ENCODE measurements at regions of chr20 and their contacts with region 1.

Region 1: GRCh38 chr20:5448449-5449118 is 131.8 kb upstream of the PROKR2 start:
- DNase-seq: peak; percentile 49
- H3K4me3 ChIP-seq: no peak overlapping the region
- H3K27ac ChIP-seq: no peak overlapping the region
- H3K4me1 ChIP-seq: no peaks in the 10 kb centered on the region
- H3K27me3 ChIP-seq: peaks cover 3 to 13% of the 10 kb centered on the region in 2 experiments
- CTCF ChIP-seq: peak; percentile 61 to 65
- POLR2A ChIP-seq: no peak

Region 2: DNA sequence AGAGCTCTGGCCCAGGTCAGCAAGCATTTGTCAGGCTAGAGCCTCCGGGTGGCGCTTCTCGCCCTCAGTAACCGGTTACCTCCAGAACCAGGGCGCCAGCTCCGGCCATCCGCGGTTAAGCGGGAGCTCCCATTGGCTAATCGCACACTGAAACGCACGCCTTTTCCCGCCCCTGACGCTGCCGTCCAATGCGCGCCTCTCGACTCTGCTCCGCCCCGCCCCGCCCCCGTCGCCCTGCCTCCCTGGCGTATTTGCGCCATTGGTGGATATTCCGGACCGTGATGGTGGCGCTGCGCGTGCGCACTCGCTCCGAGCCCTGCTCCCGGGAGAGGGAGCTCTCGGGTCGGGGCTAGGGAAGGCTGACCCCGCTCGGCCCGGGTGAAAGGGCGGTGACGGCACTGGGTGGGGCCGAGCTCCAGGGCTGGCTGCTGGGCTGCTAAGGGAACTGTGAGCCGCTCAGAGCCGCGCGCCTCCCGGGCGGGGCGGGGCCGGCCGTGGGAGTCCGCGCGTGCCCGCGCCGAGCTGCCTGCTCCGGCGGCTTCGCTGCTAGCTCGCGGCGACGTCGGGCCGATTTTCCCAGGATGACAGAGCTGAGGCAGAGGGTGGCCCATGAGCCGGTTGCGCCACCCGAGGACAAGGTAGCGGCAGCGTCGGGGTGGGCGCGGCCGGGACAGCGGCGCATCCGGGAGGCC is 321.9 kb before region 1 on chr20 and contains the start of gene CDS2:
- CTCF ChIA-PET with region 1: interaction called, 7 read pairs
- POLR2A ChIA-PET with region 1: no interaction called
- dilution Hi-C with region 1: no loop called
- intact Hi-C with region 1: loop called (anchors 2 kb)
- DNase-seq: peak; percentile 100
- H3K4me3 ChIP-seq: peak within 1 kb of the TSS; percentile 55 to 87 (median 73)
- H3K27ac ChIP-seq: peak within 1 kb of the TSS; percentile 63
- H3K4me1 ChIP-seq: peaks cover 10% of the 10 kb centered on the region
- H3K27me3 ChIP-seq: no peaks in the 10 kb centered on the region
- CTCF ChIP-seq: peak; percentile 28 to 59
- POLR2A ChIP-seq: peak; percentile 19
- total RNA-seq, gene CDS2: 48.1 and 49.0 TPM in 2 replicates

Region 3: GRCh38 chr20:5215672-5216304 is 232.8 kb before region 1 on chr20:
- CTCF ChIA-PET with region 1: interaction called, 228 read pairs
- POLR2A ChIA-PET with region 1: no interaction called
- dilution Hi-C with region 1: no loop called
- intact Hi-C with region 1: loop called (anchors 5 kb)
- DNase-seq: peak; percentile 84
- H3K4me3 ChIP-seq: no peak overlapping the region
- H3K27ac ChIP-seq: peak overlapping the region; percentile 14
- H3K4me1 ChIP-seq: peaks cover 13% of the 10 kb centered on the region
- H3K27me3 ChIP-seq: no peaks in the 10 kb centered on the region
- CTCF ChIP-seq: no peak
- POLR2A ChIP-seq: no peak

Region 4: DNA sequence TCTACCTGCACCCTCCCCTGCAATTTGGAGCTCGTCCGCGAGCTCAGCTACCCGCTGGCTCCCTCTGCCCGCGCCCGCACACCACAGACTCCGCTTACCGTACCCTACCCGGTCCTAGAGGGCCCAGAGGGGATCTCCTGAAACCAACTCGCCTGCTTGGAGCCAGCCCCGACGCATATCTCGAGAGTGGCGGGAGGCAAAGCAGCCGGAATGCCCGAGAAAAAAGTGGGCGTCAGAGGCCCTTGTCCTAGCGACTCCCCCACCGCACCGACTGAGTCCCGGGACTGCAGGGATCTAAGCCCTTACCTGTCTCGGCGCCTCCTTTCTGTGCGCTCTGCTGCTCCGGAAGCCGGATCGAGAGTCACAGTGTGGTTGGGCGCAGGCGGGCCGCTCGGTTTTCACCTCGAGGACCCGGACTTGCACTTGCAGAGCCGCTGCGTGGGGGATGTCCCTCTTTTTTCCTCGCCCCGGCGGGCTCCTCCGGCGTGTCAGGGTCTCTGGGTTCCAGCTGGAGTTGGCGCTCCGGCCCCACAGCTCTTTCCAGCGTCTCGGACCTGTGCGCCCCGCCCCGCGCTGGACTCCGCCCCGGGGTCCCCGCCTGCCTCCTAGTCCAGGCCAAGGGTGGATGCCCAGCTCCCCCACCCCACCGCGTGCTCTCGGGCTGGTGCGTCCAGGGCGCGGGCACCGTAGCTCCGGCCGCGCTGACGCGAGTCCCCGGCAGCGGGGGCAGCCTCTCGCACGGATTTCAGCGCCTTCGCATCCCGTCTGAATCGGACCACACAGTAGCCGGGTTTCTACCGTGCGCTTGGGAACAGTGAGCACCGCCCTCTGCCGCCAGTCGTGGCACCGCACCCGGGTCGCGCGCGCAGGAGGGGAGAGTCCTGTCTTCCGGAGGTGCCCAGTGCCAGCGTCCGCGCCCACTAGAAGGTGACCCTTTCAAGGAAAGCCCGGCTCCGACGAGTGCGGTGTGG is 132.1 kb before region 1 on chr20 and contains the start of gene PROKR2:
- CTCF ChIA-PET with region 1: no interaction called
- POLR2A ChIA-PET with region 1: no interaction called
- dilution Hi-C with region 1: no loop called
- intact Hi-C with region 1: loop called (anchors 10 kb)
- DNase-seq: no peak
- H3K4me3 ChIP-seq: no peak within 1 kb of the TSS
- H3K27ac ChIP-seq: no peak within 1 kb of the TSS
- H3K4me1 ChIP-seq: no peaks in the 10 kb centered on the region
- H3K27me3 ChIP-seq: peaks cover 41 to 45% of the 10 kb centered on the region in 2 experiments
- CTCF ChIP-seq: peak in 1 of 2 donors; percentile 16
- POLR2A ChIP-seq: no peak
- total RNA-seq, gene PROKR2: not detected in 2 replicates

Region 5: DNA sequence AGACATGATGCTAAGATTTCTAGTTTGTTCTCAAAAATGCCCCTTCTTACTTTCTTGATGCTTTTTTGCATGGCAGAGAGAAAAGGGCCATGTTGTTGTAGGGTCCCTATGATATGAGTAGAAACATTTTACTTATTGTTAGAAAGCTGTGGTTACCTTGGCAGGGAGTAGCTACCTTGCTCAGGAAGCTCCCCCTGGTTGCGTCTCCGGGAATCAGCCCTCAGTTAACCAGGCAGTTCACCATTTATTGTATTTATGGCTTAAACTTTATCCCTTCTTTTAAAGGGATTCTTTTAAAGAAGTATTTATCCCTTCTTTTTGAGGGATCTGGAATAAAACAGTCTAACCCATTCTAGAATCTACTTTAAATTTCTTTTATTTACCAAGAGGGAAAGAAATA is 17.9 kb before region 1 on chr20:
- CTCF ChIA-PET with region 1: interaction called, 21 read pairs
- POLR2A ChIA-PET with region 1: no interaction called
- dilution Hi-C with region 1: no loop called
- intact Hi-C with region 1: no loop called
- DNase-seq: no peak
- H3K4me3 ChIP-seq: no peak overlapping the region
- H3K27ac ChIP-seq: no peak overlapping the region
- H3K4me1 ChIP-seq: no peaks in the 10 kb centered on the region
- H3K27me3 ChIP-seq: peaks cover 0 to 5% of the 10 kb centered on the region in 2 experiments
- CTCF ChIP-seq: no peak
- POLR2A ChIP-seq: no peak

Region 6: DNA sequence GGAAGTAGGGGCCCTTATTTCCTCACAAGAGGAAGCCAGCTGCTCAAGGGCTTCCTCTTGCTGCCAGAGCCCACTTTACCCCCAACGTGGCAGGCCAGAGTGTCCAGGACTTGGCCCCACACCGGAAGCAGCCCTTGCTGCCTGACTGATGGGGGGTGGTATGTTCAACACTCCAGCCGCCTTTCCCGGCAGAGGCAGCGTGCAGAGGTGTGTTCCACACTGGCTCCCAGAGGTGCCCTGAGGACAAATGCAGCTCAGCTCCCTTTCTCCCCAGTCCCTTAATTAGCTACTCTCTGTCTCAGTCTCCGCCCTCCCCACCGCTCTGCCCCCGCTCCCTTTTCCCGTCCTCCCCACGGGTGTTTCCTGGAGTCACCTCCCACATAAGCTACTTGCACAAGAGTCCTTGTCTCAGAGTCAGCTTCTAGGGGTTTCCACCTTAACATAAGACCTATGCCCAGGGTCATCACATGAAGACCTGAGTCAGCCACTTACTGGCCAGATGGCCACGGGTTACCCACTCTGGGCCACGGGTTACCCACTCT is 239.9 kb after region 1 on chr20:
- CTCF ChIA-PET with region 1: no interaction called
- POLR2A ChIA-PET with region 1: no interaction called
- dilution Hi-C with region 1: no loop called
- intact Hi-C with region 1: no loop called
- DNase-seq: no peak
- H3K4me3 ChIP-seq: no peak overlapping the region
- H3K27ac ChIP-seq: no peak overlapping the region
- H3K4me1 ChIP-seq: no peaks in the 10 kb centered on the region
- H3K27me3 ChIP-seq: no peaks in the 10 kb centered on the region
- CTCF ChIP-seq: no peak
- POLR2A ChIP-seq: no peak

Measured in endothelial cell of umbilical vein (primary cell).